ENCODE measurements at regions of chr22 and their contacts with region 1.

Region 1: GRCh38 chr22:45318168-45318557 is 8.4 kb downstream of the FAM118A start:
- DNase-seq: peak; percentile 75 to 85 (median 83)
- ATAC-seq: peak in 3 of 4 donors; percentile 28 to 77 (median 73)
- H3K4me3 ChIP-seq: peak overlapping the region in 7 of 12 donors; percentile 2 to 38 (median 18)
- H3K27ac ChIP-seq: peak overlapping the region; percentile 35 to 92 (median 74)
- H3K4me1 ChIP-seq: peaks cover 0 to 74% (median 42%) of the 10 kb centered on the region in 12 donors
- H3K27me3 ChIP-seq: no peaks in the 10 kb centered on the region
- CTCF ChIP-seq: no peak
- POLR2A ChIP-seq: no peak

Region 2: GRCh38 chr22:45192701-45193187 is 125.4 kb before region 1 on chr22:
- intact Hi-C with region 1: no loop called
- DNase-seq: no peak
- ATAC-seq: peak in 3 of 4 donors; percentile 25 to 37 (median 28)
- H3K4me3 ChIP-seq: no peak overlapping the region
- H3K27ac ChIP-seq: no peak overlapping the region
- H3K4me1 ChIP-seq: peaks cover 0 to 12% (median 0%) of the 10 kb centered on the region in 12 donors
- H3K27me3 ChIP-seq: no peaks in the 10 kb centered on the region
- CTCF ChIP-seq: no peak
- POLR2A ChIP-seq: no peak

Region 3: DNA sequence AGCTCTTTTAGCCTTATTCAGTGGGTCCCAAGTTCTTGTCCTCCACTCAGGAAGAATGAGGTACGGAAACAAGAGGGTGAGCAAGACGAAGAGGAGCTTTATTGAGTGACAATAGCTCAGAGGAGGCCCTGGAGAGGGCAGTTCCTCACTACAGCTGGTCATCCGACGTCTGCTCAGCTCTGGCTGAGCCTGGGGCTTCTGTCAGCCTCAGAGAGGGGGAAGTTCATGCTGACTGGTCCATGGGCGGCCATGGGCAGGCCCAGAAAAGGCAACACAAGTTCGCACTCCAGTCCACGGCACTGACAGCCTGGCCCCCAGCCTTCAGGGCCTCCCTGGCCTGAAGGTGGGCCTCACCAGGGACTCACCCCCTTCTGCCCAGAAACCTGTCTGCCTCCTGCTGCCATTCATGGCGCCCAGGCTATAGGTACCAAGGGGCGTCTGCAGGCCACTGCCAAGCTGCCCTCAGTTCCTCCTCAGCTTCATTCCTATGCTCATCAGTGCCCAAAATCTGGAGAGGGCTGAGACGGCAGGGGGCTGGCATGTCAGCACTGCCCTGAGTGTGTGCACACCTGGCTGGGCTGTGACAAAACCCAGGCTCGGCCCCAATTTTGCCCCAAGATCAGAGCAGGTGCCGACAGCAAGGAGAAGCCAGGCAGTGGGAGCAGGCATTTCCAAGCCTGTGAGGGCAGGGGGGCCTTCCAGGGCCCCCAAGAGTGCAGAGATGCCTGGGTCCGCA is 55.8 kb before region 1 on chr22:
- intact Hi-C with region 1: no loop called
- DNase-seq: no peak
- ATAC-seq: peak in 1 of 4 donors; percentile 56
- H3K4me3 ChIP-seq: no peak overlapping the region
- H3K27ac ChIP-seq: peak overlapping the region in 1 of 12 donors; percentile 80
- H3K4me1 ChIP-seq: peaks cover 0 to 25% (median 9%) of the 10 kb centered on the region in 12 donors
- H3K27me3 ChIP-seq: no peaks in the 10 kb centered on the region
- CTCF ChIP-seq: no peak
- POLR2A ChIP-seq: no peak

Region 4: GRCh38 chr22:45276507-45277105 is 41.6 kb before region 1 on chr22:
- intact Hi-C with region 1: loop called in 4 of 10 experiments (anchors 5 to 10 kb)
- DNase-seq: no peak
- ATAC-seq: no peak
- H3K4me3 ChIP-seq: no peak overlapping the region
- H3K27ac ChIP-seq: no peak overlapping the region
- H3K4me1 ChIP-seq: peaks cover 0 to 33% (median 14%) of the 10 kb centered on the region in 12 donors
- H3K27me3 ChIP-seq: no peaks in the 10 kb centered on the region
- CTCF ChIP-seq: no peak
- POLR2A ChIP-seq: no peak

Region 5: DNA sequence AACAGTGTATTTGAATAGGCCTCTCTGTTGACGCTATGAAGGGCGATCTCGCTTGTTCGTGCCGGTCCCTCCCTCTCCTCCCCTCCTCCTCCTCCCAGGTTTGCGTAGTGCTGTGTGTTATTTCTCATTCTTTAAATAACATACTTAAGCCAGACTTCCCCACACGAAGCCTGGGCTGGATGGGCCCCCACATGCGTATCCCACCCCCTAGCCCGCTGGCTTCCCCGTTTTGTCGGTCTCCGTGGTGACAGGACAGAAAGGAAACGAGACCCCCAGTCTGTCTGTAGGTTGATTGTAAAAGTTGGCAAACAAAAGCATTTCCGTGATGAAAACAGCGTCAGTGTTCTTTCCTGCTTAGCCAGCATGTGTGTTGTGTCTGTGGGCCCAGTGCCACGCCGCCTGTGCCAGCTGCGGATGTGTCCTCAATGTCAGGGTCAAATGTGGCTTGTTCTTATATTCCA is 18.8 kb after region 1 on chr22:
- intact Hi-C with region 1: loop called in 1 of 10 experiments (anchors 1 kb)
- DNase-seq: peak; percentile 78 to 89 (median 83)
- ATAC-seq: peak; percentile 28 to 76 (median 56)
- H3K4me3 ChIP-seq: peak overlapping the region in 1 of 12 donors; percentile 8
- H3K27ac ChIP-seq: peak overlapping the region in 10 of 12 donors; percentile 7 to 80 (median 62)
- H3K4me1 ChIP-seq: peaks cover 0 to 55% (median 39%) of the 10 kb centered on the region in 12 donors
- H3K27me3 ChIP-seq: no peaks in the 10 kb centered on the region
- CTCF ChIP-seq: no peak
- POLR2A ChIP-seq: no peak

Region 6: GRCh38 chr22:45435544-45436139 is 117.5 kb after region 1 on chr22:
- intact Hi-C with region 1: loop called in 4 of 10 experiments (anchors 2 to 10 kb)
- DNase-seq: peak; percentile 82 to 92 (median 87)
- ATAC-seq: peak; percentile 86 to 96 (median 94)
- H3K4me3 ChIP-seq: peak overlapping the region in 8 of 12 donors; percentile 18 to 44 (median 28)
- H3K27ac ChIP-seq: peak overlapping the region in 11 of 12 donors; percentile 17 to 75 (median 61)
- H3K4me1 ChIP-seq: peaks cover 0 to 14% (median 6%) of the 10 kb centered on the region in 12 donors
- H3K27me3 ChIP-seq: peaks cover 0 to 11% (median 0%) of the 10 kb centered on the region in 9 donors
- CTCF ChIP-seq: peak; percentile 93 to 99 (median 96)
- POLR2A ChIP-seq: no peak

Measured in heart left ventricle (tissue), 16 donors.